Thyroid gland (tissue), 4 donors: ENCODE measurements at regions of chr2 and their contacts with region 1.

Region 1: GRCh38 chr2:178414266-178415247 is 36.4 kb downstream of the PRKRA start:
- DNase-seq: peak; percentile 90 to 91
- H3K4me3 ChIP-seq: peak overlapping the region in 2 of 3 donors; percentile 62 to 70
- H3K27ac ChIP-seq: peak overlapping the region; percentile 91 to 96 (median 95)
- H3K4me1 ChIP-seq: peaks cover 3% of the 10 kb centered on the region in 2 donors
- H3K27me3 ChIP-seq: no peaks in the 10 kb centered on the region
- CTCF ChIP-seq: peak; percentile 60 to 91 (median 88)
- POLR2A ChIP-seq: peak in 1 of 2 donors; percentile 69

Region 2: GRCh38 chr2:178306352-178307073 is 108.0 kb before region 1 on chr2:
- intact Hi-C with region 1: loop called (anchors 10 kb)
- DNase-seq: peak; percentile 63 to 69
- H3K4me3 ChIP-seq: no peak overlapping the region
- H3K27ac ChIP-seq: no peak overlapping the region
- H3K4me1 ChIP-seq: peaks cover 2 to 4% of the 10 kb centered on the region in 2 donors
- H3K27me3 ChIP-seq: no peaks in the 10 kb centered on the region
- CTCF ChIP-seq: peak in 5 of 6 experiments; percentile 32 to 68 (median 56)
- POLR2A ChIP-seq: no peak

Region 3: DNA sequence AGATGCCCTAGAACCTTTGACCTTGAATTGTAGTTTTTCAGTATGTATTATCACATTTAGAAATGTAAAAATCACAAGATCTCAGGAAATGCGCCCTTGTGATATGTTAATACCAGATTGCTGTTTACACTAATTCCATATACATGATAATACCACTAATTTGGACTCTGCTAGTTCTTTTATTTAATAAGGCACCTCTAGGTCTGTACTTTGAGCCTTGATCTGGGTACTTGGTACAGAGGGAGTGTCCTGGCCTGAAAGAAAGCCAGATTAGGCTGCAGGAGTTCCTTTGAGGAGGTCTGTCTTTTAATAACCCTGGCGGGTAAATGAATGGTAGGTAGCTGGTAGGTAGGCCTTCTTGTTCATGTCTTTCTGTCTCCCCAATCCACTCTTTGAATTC is 92.0 kb after region 1 on chr2:
- intact Hi-C with region 1: no loop called
- DNase-seq: no peak
- H3K4me3 ChIP-seq: no peak overlapping the region
- H3K27ac ChIP-seq: no peak overlapping the region
- H3K4me1 ChIP-seq: no peaks in the 10 kb centered on the region
- H3K27me3 ChIP-seq: no peaks in the 10 kb centered on the region
- CTCF ChIP-seq: no peak
- POLR2A ChIP-seq: no peak